ENCODE measurements at regions of chr16 and their contacts with region 1.

Region 1: DNA sequence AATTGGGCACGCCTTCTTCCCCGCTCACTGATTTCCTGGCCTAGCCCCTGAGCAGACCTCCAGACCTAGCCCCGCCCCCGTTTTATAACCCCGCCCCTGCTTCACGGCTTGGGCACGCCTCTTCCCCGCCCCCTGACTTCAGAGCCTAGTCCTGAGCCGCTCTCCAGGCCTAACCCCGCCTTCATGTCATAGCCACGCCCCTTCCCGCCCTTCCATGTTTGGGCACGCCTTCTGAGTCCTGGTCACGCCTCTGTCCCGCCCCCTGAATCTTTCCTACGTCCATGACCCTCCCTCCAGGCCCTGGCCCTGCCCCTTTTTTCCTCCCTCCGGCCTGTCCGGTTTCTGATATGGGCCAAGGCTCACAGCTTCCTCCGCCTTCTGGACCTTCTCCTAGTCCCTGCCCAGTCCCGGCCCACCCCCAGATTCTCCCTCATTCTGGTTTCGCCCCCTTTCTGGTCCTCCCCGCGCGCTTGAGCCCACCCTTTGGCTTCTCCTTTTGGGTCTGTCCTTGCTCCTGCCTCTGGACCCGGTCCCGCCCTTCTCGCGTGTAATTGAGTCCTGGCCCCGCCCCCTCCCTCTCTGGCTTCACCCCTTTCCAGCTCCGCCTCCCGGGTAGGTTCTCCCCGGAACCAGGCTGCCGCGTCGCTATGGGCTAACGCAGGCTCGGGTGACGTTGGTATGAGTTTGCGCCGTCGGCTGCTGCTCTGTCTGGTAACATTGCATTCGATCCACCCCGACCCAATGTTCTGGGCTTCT is 15.1 kb upstream of the EEF2K start:
- DNase-seq: peak; percentile 97 to 100 (median 100)
- ATAC-seq: peak; percentile 61
- H3K4me3 ChIP-seq: peak overlapping the region; percentile 62 to 66
- H3K4me3 Mint-ChIP-seq: peak overlapping the region; percentile 89
- H3K27ac ChIP-seq: peak overlapping the region; percentile 97 to 99
- H3K27ac Mint-ChIP-seq: peak overlapping the region; percentile 100
- H3K4me1 ChIP-seq: peaks cover 56% of the 10 kb centered on the region
- H3K4me1 Mint-ChIP-seq: peaks cover 69% of the 10 kb centered on the region
- H3K27me3 ChIP-seq: no peaks in the 10 kb centered on the region
- H3K27me3 Mint-ChIP-seq: peaks cover 2% of the 10 kb centered on the region
- CTCF ChIP-seq: no peak

Region 2: GRCh38 chr16:21277927-21278706 is 912.8 kb before region 1 on chr16 and contains the start of gene CRYM:
- CTCF ChIA-PET with region 1: no interaction called
- POLR2A ChIA-PET with region 1: no interaction called
- intact Hi-C with region 1: no loop called
- DNase-seq: peak in 5 of 9 experiments; percentile 16 to 42 (median 22)
- ATAC-seq: peak; percentile 70
- H3K4me3 ChIP-seq: no peak within 1 kb of the TSS
- H3K4me3 Mint-ChIP-seq: peak within 1 kb of the TSS; percentile 29
- H3K27ac ChIP-seq: no peak within 1 kb of the TSS
- H3K27ac Mint-ChIP-seq: no peak within 1 kb of the TSS
- H3K4me1 ChIP-seq: peaks cover 6% of the 10 kb centered on the region
- H3K4me1 Mint-ChIP-seq: no peaks in the 10 kb centered on the region
- H3K27me3 ChIP-seq: peaks cover 5 to 14% of the 10 kb centered on the region in 2 experiments
- H3K27me3 Mint-ChIP-seq: peaks cover 64% of the 10 kb centered on the region
- CTCF ChIP-seq: no peak
- total RNA-seq, gene CRYM: not detected

Region 3: GRCh38 chr16:21646721-21647561 is 544.0 kb before region 1 on chr16:
- CTCF ChIA-PET with region 1: no interaction called
- POLR2A ChIA-PET with region 1: no interaction called
- intact Hi-C with region 1: loop called (anchors 5 to 10 kb)
- DNase-seq: peak; percentile 42 to 90 (median 71)
- ATAC-seq: peak; percentile 78
- H3K4me3 ChIP-seq: peak overlapping the region in 1 of 2 experiments; percentile 9
- H3K4me3 Mint-ChIP-seq: peak overlapping the region; percentile 74
- H3K27ac ChIP-seq: peak overlapping the region; percentile 58 to 85
- H3K27ac Mint-ChIP-seq: peak overlapping the region; percentile 95
- H3K4me1 ChIP-seq: peaks cover 51% of the 10 kb centered on the region
- H3K4me1 Mint-ChIP-seq: peaks cover 55% of the 10 kb centered on the region
- H3K27me3 ChIP-seq: no peaks in the 10 kb centered on the region
- H3K27me3 Mint-ChIP-seq: no peaks in the 10 kb centered on the region
- CTCF ChIP-seq: no peak

Region 4: GRCh38 chr16:22001591-22001990 is 189.4 kb before region 1 on chr16:
- CTCF ChIA-PET with region 1: interaction called, 100 read pairs
- POLR2A ChIA-PET with region 1: interaction called, 14 read pairs
- intact Hi-C with region 1: loop called (anchors 1 kb)
- DNase-seq: no peak
- ATAC-seq: no peak
- H3K4me3 ChIP-seq: no peak overlapping the region
- H3K4me3 Mint-ChIP-seq: no peak overlapping the region
- H3K27ac ChIP-seq: no peak overlapping the region
- H3K27ac Mint-ChIP-seq: no peak overlapping the region
- H3K4me1 ChIP-seq: peaks cover 11% of the 10 kb centered on the region
- H3K4me1 Mint-ChIP-seq: peaks cover 11% of the 10 kb centered on the region
- H3K27me3 ChIP-seq: no peaks in the 10 kb centered on the region
- H3K27me3 Mint-ChIP-seq: no peaks in the 10 kb centered on the region
- CTCF ChIP-seq: no peak

Region 5: DNA sequence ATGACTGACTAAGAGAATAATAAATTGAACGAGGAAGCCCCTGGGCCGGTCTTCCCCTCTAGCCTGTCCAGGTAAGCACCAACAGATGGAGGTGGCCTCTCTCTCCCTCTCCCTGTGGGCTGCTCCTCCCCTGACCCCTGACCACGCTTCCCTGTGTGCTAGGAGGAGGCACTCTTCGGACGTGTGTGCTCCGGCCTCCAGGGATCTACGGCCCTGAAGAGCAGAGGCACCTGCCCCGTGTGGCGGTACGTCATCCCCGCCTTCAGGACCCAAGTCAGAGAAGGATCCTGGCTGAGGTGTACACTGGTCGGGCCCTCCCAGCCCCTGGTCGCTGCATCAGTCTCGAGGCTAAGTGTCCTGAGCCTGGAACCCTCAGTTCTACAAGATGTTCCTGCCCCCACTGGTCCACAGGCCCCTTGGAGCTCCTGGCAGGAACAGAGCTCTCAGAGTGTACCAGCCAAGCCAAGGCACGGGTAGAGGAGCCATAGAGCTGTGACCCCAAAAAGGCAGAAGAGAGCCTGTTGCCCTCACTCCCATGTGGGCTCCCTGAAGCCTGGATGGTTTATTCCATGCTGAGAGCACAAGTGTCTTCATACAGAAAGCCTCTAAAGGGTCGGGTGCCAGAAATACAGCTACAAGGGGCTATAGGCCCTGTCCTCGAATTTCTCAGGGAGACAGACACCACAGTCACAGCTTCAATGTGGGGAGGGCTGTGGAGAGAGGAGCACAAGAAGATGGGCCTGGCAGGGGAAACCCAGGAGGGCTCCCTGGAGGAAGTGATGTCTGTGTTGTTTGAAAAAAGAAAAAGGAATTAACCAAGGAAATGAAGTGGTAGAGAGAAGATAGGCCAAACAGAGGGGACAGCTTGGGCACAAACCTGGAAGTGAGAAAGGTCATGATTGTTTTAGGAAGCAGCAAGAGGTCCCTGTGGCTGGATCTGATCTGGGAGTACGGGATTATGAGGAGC is 12.7 kb before region 1 on chr16:
- CTCF ChIA-PET with region 1: interaction called, 13 read pairs
- POLR2A ChIA-PET with region 1: interaction called, 3 read pairs
- intact Hi-C with region 1: no loop called
- DNase-seq: no peak
- ATAC-seq: no peak
- H3K4me3 ChIP-seq: no peak overlapping the region
- H3K4me3 Mint-ChIP-seq: no peak overlapping the region
- H3K27ac ChIP-seq: no peak overlapping the region
- H3K27ac Mint-ChIP-seq: no peak overlapping the region
- H3K4me1 ChIP-seq: no peaks in the 10 kb centered on the region
- H3K4me1 Mint-ChIP-seq: no peaks in the 10 kb centered on the region
- H3K27me3 ChIP-seq: no peaks in the 10 kb centered on the region
- H3K27me3 Mint-ChIP-seq: no peaks in the 10 kb centered on the region
- CTCF ChIP-seq: no peak

Region 6: GRCh38 chr16:22264786-22265185 is 73.8 kb after region 1 on chr16:
- CTCF ChIA-PET with region 1: no interaction called
- POLR2A ChIA-PET with region 1: no interaction called
- intact Hi-C with region 1: no loop called
- DNase-seq: peak in 2 of 9 experiments; percentile 14 to 51
- ATAC-seq: no peak
- H3K4me3 ChIP-seq: no peak overlapping the region
- H3K4me3 Mint-ChIP-seq: no peak overlapping the region
- H3K27ac ChIP-seq: no peak overlapping the region
- H3K27ac Mint-ChIP-seq: peak overlapping the region; percentile 53
- H3K4me1 ChIP-seq: peaks cover 14% of the 10 kb centered on the region
- H3K4me1 Mint-ChIP-seq: peaks cover 26% of the 10 kb centered on the region
- H3K27me3 ChIP-seq: no peaks in the 10 kb centered on the region
- H3K27me3 Mint-ChIP-seq: no peaks in the 10 kb centered on the region
- CTCF ChIP-seq: no peak

Region 7: DNA sequence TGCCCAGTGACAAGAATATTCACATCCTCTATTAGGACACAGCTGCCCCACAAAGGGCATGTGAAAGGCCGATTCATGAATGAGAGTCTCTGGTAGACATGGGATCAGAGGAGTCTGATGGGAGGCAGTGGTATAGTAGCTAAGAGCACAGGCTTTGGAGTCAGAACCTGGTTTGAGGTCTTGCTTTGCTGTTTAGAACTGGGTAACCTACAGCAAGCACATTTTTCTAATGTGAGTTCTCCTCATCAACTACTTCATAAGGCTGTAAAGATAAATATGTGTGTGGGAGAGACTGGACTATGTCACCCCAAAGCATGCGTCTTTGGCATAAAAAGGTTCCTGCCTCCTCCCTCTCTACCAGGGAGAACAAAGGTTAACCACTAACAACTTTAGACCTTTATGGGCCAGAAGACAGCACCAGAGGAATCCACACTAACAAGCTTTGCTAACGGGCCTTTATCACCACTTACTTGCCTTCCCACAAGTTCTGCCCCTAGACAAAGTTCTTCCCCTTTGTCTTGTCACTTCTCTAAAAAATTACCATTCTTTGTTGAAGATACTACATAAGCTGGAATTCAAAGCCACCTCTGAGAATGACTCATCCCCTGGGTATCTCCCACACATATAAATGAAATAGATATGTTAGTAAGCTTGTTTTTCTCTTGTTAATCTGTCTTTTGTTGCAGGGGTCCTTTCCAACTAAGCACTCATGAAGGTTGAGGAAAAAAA is 162.4 kb after region 1 on chr16:
- CTCF ChIA-PET with region 1: no interaction called
- POLR2A ChIA-PET with region 1: no interaction called
- intact Hi-C with region 1: loop called in 1 of 2 experiments (anchors 5 kb)
- DNase-seq: peak in 4 of 9 experiments; percentile 21 to 69 (median 36)
- ATAC-seq: peak; percentile 30
- H3K4me3 ChIP-seq: no peak overlapping the region
- H3K4me3 Mint-ChIP-seq: peak overlapping the region; percentile 19
- H3K27ac ChIP-seq: peak overlapping the region in 1 of 2 experiments; percentile 51
- H3K27ac Mint-ChIP-seq: peak overlapping the region; percentile 89
- H3K4me1 ChIP-seq: peaks cover 55% of the 10 kb centered on the region
- H3K4me1 Mint-ChIP-seq: peaks cover 59% of the 10 kb centered on the region
- H3K27me3 ChIP-seq: no peaks in the 10 kb centered on the region
- H3K27me3 Mint-ChIP-seq: no peaks in the 10 kb centered on the region
- CTCF ChIP-seq: no peak

Measured in CD8-positive, alpha-beta T cell (primary cell).